Colonic mucosa (tissue), 4 donors: ENCODE measurements at regions of chr17 and their contacts with region 1.

Region 1: DNA sequence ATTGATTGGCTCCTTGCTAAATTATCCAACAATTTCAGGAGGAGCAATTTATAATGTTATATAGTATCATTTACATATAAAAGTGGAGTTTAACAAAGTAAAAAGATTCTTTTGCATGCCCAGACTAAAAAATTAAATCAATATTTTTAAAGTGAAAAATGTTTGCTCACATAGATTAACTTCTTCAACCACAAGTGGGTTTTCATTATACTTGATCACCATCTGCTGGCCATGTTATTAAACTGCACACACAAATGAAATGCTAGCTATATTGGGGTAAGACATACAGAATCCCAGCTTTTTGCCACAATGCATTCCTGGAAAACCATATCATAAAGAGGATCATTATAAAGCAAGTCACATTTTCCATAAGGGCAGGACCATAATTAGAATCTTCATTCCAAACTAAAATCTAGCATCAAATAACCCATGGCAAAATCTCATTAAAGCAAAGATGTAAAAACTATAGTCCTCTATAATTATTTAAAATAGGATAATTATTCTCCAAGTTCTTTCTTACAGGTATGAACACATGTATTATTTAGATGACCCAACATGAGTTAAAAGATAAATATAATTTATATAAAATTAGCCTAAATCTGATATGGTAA is 26.3 kb downstream of the CEP112 start:
- DNase-seq: no peak
- H3K4me3 ChIP-seq: no peak overlapping the region
- H3K27ac ChIP-seq: no peak overlapping the region
- H3K4me1 ChIP-seq: no peaks in the 10 kb centered on the region
- H3K27me3 ChIP-seq: no peaks in the 10 kb centered on the region
- CTCF ChIP-seq: peak; percentile 59

Region 2: GRCh38 chr17:65231662-65232335 is 933.8 kb before region 1 on chr17:
- intact Hi-C with region 1: loop called (anchors 10 kb)
- DNase-seq: peak; percentile 69
- H3K4me3 ChIP-seq: no peak overlapping the region
- H3K27ac ChIP-seq: no peak overlapping the region
- H3K4me1 ChIP-seq: no peaks in the 10 kb centered on the region
- H3K27me3 ChIP-seq: no peaks in the 10 kb centered on the region
- CTCF ChIP-seq: peak; percentile 48